Naive thymus-derived CD8-positive, alpha-beta T cell (primary cell): ENCODE measurements at regions of chr17 and their contacts with region 1.

Region 1: DNA sequence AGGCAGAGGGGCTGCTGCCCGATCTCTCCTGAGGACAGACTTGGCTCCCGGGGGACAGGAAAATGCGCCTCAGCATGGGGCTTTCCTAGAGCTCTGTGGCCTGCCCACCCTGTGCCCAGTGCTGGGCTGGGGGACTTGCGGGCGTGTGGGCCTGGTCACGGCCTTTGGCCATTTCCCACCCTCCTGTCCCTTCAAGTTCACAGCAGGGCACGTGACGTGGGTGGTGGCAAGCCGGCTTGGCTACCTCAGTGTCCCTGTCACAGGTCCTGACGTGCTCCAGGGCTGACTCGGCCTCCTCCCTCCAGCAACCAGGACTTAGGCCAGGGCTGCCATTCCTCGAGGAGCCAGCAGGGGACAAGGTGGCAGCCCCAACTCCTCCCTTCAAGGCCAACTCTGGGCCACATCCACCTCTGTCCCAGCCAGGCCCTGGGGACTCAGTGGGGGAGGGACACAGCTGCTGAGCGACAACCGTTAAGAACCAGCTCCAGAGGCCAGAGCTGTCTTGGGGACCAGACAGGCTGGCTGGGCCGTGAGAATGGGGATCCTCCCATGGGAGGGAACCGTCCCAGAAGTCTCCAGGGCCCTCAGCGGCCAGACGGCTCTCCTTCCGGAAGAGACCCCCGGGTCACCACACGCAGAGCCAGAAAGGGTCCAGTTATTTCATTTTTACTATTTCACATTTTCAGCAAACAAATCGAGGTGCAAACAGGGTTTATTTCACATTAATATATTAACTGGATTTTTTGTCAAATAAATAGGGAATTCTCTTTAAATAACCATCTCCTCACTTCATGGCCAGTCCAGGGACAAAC is 1.1 kb upstream of the UNC13D start:
- DNase-seq: peak in 7 of 10 donors; percentile 40 to 77 (median 51)
- ATAC-seq: peak; percentile 42 to 43
- H3K4me3 Mint-ChIP-seq: peak overlapping the region in 9 of 10 donors; percentile 22 to 63 (median 45)
- H3K27ac Mint-ChIP-seq: peak overlapping the region; percentile 47 to 92 (median 80)
- H3K4me1 Mint-ChIP-seq: peaks cover 9 to 36% (median 28%) of the 10 kb centered on the region in 4 donors
- H3K27me3 Mint-ChIP-seq: no peaks in the 10 kb centered on the region

Region 2: DNA sequence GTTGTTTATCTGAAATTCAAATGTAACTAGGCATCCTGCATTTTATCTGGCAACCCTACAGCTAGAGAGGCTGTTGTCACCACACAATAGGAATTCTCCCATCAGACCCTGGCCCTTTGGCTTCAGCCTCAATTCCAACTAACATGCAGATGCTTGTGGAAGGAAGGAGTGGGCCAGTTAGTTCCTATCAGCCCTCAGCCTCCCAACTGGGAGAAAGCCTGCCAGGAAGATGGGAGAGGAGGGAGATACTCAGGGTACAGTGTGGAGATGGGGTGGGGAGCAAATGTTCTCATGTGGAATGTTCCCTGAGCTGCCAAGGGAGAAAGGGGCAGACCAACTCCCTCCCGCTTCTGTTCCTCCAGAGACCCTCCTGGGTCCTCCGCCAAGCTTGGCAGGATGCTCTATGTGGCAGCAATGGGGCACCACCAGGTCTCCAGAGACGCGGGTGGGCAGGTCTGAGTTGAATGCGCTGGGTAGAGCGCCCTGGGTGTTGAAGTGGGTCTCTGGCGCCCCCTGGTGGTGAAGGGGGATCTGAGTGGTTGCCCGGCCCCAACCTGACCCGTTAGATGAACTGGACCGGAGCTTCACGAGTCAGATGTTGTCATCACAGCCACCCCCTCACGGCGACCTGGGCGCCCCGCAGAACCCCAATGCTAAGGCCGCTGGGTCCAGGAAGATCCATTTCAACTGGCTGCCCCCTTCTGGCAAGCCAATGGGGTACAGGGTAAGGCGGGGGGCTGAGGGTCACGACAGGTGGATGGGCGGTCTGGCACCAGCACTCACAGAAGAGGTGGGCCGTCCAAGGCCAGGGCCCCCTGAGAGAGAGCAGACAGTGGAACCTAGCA is 95.5 kb before region 1 on chr17:
- POLR2A ChIA-PET with region 1: interaction called, 12 read pairs
- DNase-seq: peak; percentile 71 to 93 (median 86)
- ATAC-seq: peak; percentile 67 to 73
- H3K4me3 Mint-ChIP-seq: peak overlapping the region in 1 of 10 donors; percentile 11
- H3K27ac Mint-ChIP-seq: peak overlapping the region in 3 of 10 donors; percentile 27 to 83 (median 51)
- H3K4me1 Mint-ChIP-seq: peaks cover 10 to 18% (median 15%) of the 10 kb centered on the region in 4 donors
- H3K27me3 Mint-ChIP-seq: peaks cover 0 to 3% (median 0%) of the 10 kb centered on the region in 5 donors

Region 3: DNA sequence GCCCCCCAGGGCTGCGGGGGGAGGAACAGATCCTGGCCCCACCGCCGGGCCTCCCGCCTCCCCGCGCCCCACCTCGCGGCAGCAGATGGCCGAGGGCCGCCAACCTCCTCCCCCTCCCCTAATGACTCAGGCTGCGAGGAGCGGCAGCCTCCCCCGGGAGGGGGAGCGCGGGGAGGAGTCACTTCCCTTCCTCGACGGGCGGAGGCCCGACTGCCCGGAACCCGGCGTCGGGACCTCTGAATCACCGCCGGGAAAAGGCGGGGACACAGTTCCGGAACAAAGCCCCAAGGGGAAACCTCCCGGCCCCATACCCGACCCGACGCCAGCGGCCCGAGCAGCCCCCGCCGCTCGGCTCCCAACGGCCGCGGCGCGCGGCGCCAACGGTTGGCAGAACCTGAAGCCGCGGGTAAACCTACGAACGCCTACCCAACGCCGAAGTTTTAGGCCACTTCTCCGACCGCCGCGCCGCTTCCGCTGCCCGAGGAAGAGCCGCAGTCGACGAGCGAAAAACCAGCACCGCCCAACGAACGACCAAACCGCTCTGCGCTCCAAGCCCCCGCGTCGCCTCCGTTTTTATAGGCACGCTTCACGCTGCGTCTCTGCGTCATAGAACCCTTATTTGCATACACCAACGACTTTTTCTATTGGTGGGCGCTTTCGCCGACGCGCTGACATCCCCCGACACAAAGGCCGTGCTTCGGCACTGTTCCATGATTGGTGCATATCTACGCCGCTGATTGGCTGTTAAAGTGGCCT is 65.8 kb before region 1 on chr17:
- POLR2A ChIA-PET with region 1: interaction called, 122 read pairs
- DNase-seq: peak; percentile 79 to 99 (median 95)
- ATAC-seq: peak; percentile 69 to 70
- H3K4me3 Mint-ChIP-seq: peak overlapping the region; percentile 85 to 100 (median 96)
- H3K27ac Mint-ChIP-seq: peak overlapping the region; percentile 94 to 100 (median 99)
- H3K4me1 Mint-ChIP-seq: peaks cover 26 to 67% (median 60%) of the 10 kb centered on the region in 4 donors
- H3K27me3 Mint-ChIP-seq: peaks cover 0 to 6% (median 0%) of the 10 kb centered on the region in 5 donors

Region 4: GRCh38 chr17:75827252-75828115 is 17.8 kb before region 1 on chr17:
- POLR2A ChIA-PET with region 1: interaction called, 45 read pairs
- DNase-seq: peak; percentile 47 to 82 (median 58)
- ATAC-seq: peak; percentile 68 to 70
- H3K4me3 Mint-ChIP-seq: peak overlapping the region; percentile 52 to 79 (median 63)
- H3K27ac Mint-ChIP-seq: peak overlapping the region; percentile 25 to 93 (median 85)
- H3K4me1 Mint-ChIP-seq: peaks cover 6 to 33% (median 20%) of the 10 kb centered on the region in 4 donors
- H3K27me3 Mint-ChIP-seq: no peaks in the 10 kb centered on the region

Region 5: DNA sequence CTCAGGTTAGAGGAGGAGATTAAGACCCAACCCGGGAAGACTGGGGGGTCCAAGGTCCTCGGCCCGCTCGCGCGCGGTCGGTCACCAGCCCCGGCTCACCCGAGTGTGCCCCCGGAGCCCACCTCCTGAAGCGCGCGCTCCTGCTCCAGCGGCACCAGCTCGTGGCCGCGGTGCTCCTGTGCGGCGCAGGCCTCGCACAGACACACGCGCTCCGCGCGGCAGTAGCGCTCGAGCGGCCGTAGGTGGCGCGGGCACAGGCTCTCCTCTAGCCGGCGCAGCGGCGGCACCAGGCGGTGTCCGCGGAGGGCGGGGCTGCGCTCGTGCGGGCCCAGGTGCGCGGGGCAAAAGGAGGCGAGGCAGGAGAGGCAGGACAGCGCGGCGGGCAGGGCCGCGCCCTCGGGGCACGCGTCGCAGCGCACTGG is 32.5 kb after region 1 on chr17:
- POLR2A ChIA-PET with region 1: interaction called, 26 read pairs
- DNase-seq: peak; percentile 51 to 81 (median 66)
- ATAC-seq: peak; percentile 71
- H3K4me3 Mint-ChIP-seq: peak overlapping the region; percentile 80 to 92 (median 87)
- H3K27ac Mint-ChIP-seq: peak overlapping the region; percentile 65 to 96 (median 92)
- H3K4me1 Mint-ChIP-seq: peaks cover 25 to 57% (median 53%) of the 10 kb centered on the region in 4 donors
- H3K27me3 Mint-ChIP-seq: peaks cover 0 to 2% (median 0%) of the 10 kb centered on the region in 5 donors

Region 6: GRCh38 chr17:76994237-76994637 is 1149.0 kb after region 1 on chr17:
- POLR2A ChIA-PET with region 1: no interaction called
- DNase-seq: no peak
- ATAC-seq: no peak
- H3K4me3 Mint-ChIP-seq: peak overlapping the region in 4 of 10 donors; percentile 27 to 58 (median 50)
- H3K27ac Mint-ChIP-seq: peak overlapping the region; percentile 71 to 98 (median 85)
- H3K4me1 Mint-ChIP-seq: peaks cover 23 to 63% (median 51%) of the 10 kb centered on the region in 4 donors
- H3K27me3 Mint-ChIP-seq: no peaks in the 10 kb centered on the region